Activated CD4-positive, alpha-beta T cell treated with anti-CD3 and anti-CD28 coated beads, Interleukin-2, amount 10 ng/mL, durations not matched to agents 7 days and 5 days (primary cell): ENCODE measurements at regions of chr6 and their contacts with region 1.

Region 1: DNA sequence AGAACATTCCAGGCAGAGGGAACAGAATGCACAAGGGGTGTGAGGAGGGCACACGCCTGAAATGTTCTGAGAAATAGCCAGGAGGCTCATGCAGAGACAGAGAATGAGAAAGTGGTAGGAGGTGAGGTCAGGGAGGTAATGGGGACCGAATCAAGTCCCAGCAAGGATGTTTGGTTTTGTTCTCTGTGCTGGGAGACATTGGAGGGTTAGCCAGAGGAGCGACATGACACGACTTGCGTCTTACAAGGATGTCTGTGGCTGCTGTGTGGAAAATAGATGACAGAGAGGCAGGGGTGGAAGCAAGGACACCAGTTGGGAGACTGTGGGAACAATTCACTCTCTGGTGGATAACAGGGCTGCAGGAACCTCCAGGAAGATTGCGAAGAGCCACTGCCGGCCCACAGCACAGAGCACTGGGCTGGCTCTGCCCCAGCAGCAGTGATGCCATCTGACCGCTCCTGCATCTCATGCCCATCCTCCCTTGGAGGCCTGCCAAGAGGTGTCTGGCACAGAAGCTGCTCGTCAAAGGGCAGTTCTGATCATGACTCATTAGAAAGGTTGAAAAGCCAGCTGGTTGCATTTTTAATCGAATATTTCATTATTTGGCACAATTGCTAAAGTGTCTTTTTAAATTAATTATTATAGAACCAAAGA is 57.7 kb upstream of the CD83 start:
- DNase-seq: no peak
- H3K4me3 Mint-ChIP-seq: no peak overlapping the region
- H3K27ac Mint-ChIP-seq: no peak overlapping the region
- H3K4me1 Mint-ChIP-seq: no peaks in the 10 kb centered on the region
- H3K27me3 Mint-ChIP-seq: peaks cover 37% of the 10 kb centered on the region

Region 2: DNA sequence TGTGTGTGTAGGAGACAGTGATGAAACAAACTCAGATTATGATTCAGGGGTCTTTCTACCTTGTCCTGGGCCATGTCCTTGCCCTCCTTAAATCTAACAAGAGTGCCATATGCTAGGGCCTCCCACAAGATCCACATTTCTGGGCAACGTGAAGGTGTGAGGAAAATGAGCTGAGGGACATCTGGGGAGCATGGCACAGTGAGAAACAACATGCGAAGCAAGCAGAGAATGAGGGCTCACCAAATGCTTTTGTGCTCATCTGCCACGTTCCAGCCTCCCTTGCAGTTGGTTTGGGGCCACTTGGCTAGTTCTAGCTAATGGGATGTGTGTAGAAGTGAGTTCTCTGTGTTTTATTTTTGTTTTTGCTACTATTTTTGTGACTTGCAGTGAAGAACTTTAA is 156.6 kb before region 1 on chr6:
- CTCF ChIA-PET with region 1: no interaction called
- POLR2A ChIA-PET with region 1: no interaction called
- DNase-seq: no peak
- H3K4me3 Mint-ChIP-seq: no peak overlapping the region
- H3K27ac Mint-ChIP-seq: no peak overlapping the region
- H3K4me1 Mint-ChIP-seq: no peaks in the 10 kb centered on the region
- H3K27me3 Mint-ChIP-seq: peaks cover 44% of the 10 kb centered on the region

Region 3: DNA sequence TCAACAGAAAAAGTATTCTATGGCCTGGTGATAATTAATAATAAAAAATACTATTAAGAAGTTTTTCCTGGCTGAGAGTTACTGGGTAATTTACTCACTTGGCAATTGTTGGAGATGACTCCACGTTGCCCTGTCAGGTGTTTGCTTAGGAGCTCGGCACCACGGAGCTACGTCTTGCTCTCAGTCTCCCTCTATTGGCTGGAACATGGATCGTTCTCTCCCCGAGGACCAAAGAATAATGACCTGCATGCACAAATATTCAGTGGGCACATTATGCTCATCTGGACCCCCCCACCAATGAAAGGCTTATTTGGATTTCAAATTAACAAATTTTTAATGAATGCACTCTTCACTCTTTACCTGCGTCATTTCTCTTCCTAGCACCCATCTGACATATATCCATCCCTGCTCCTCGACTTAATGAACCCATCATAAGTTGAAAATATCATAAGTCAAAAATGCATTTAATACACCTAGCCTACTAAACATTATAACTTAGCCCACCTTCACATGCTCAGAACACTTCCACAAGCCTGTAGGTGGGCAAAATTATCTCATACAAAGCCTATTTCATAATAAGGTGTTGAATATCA is 13.3 kb before region 1 on chr6:
- CTCF ChIA-PET with region 1: interaction called, 20 read pairs
- POLR2A ChIA-PET with region 1: no interaction called
- DNase-seq: peak; percentile 51
- H3K4me3 Mint-ChIP-seq: no peak overlapping the region
- H3K27ac Mint-ChIP-seq: no peak overlapping the region
- H3K4me1 Mint-ChIP-seq: peaks cover 1% of the 10 kb centered on the region
- H3K27me3 Mint-ChIP-seq: peaks cover 27% of the 10 kb centered on the region